Activated CD4-positive, alpha-beta memory T cell treated with anti-CD3 and anti-CD28 coated beads, Interleukin-2, amount 10 ng/mL, durations not matched to agents 7 days and 5 days (primary cell): ENCODE measurements at regions of chr5 and their contacts with region 1.

Region 1: DNA sequence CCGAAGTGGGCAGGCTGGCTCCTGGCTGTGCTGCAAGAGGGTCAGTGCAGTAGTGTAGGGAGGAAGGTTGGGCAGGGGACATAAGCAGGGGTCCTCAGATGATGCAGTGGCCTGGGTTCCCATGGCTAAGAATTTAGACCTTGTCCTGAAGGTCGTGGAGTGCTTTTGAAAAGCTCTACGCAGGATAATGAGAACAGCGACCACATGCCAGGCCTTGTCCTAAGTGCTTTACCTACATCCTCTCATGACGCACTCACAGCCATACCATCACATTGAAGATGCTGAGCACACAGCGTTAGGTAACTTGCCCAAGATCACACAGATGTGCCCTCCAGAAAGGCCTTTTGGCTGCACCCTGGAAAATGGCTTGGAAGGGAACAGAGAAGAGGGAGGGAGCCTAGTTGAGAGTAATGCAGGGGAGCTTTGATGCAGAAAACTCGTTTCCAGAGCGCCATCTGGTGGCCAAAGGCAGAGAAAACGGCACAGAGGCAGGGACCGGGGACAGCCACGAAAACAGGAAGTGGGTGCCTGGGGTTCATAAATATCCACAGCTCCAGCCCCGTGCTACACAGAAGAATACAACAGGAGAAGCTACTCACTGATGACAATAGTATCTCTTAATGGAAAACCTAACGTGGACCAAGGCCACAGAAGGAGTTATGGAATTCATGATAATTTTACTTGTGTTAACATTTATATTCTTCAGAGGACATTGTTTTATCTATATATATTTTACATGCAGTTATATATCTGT is 2.6 kb upstream of the PCDH12 start:
- DNase-seq: peak; percentile 93
- H3K4me3 Mint-ChIP-seq: peak overlapping the region; percentile 46
- H3K27ac Mint-ChIP-seq: peak overlapping the region; percentile 80
- H3K4me1 Mint-ChIP-seq: peaks cover 51% of the 10 kb centered on the region
- H3K27me3 Mint-ChIP-seq: no peaks in the 10 kb centered on the region

Region 2: DNA sequence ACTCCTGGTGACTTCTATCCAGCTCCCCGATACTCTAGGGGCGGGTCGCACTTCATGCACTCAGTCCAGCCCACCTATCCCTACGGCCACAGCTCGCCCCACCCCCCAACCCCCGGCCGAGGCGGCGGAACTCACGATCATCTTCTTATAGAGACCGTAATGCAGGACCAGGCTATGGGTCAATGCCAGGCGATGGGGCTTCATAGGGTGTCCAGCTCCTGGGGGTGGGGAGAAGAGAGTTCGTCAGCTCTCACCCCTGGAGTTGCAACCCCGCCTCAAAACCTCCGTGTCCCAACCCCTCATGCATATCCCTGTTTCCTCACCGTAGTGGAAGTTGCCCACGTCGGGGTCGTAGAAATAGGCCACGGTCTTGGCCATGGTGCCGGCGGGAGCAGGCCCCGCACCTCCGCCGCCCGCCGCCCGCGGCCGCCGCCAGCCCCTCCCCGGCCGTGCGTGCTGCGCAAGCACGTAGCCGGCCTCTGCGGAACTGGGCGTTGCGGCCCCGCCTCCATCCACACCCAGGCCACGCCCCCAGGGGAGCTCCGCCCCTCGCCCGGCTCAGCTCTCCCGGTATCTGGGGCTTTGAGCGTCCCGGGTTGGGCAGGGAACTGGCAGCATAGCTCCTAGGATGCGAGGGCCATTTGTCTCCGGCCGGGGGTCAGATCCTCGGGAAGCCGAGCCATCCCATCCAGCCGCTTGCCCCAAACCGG is 324.1 kb before region 1 on chr5 and contains the starts of genes HDAC3 and RELL2:
- CTCF ChIA-PET with region 1: interaction called, 10 read pairs
- POLR2A ChIA-PET with region 1: no interaction called
- DNase-seq: peak; percentile 94
- H3K4me3 Mint-ChIP-seq: peak within 1 kb of the TSS; percentile 93
- H3K27ac Mint-ChIP-seq: peak within 1 kb of the TSS; percentile 80
- H3K4me1 Mint-ChIP-seq: peaks cover 59% of the 10 kb centered on the region
- H3K27me3 Mint-ChIP-seq: no peaks in the 10 kb centered on the region
- total RNA-seq, gene HDAC3: 72.0 to 77.9 TPM
- total RNA-seq, gene RELL2: 18.8 to 19.4 TPM

Region 3: GRCh38 chr5:141701360-141702119 is 259.1 kb before region 1 on chr5:
- CTCF ChIA-PET with region 1: interaction called, 214 read pairs
- POLR2A ChIA-PET with region 1: interaction called, 7 read pairs
- DNase-seq: no peak
- H3K4me3 Mint-ChIP-seq: peak overlapping the region; percentile 70
- H3K27ac Mint-ChIP-seq: no peak overlapping the region
- H3K4me1 Mint-ChIP-seq: peaks cover 20% of the 10 kb centered on the region
- H3K27me3 Mint-ChIP-seq: peaks cover 36% of the 10 kb centered on the region

Region 4: GRCh38 chr5:141849375-141850243 is 111.0 kb before region 1 on chr5:
- CTCF ChIA-PET with region 1: interaction called, 12 read pairs
- POLR2A ChIA-PET with region 1: interaction called, 6 read pairs
- DNase-seq: peak; percentile 81
- H3K4me3 Mint-ChIP-seq: peak overlapping the region; percentile 80
- H3K27ac Mint-ChIP-seq: peak overlapping the region; percentile 84
- H3K4me1 Mint-ChIP-seq: peaks cover 21% of the 10 kb centered on the region
- H3K27me3 Mint-ChIP-seq: peaks cover 10% of the 10 kb centered on the region

Region 5: DNA sequence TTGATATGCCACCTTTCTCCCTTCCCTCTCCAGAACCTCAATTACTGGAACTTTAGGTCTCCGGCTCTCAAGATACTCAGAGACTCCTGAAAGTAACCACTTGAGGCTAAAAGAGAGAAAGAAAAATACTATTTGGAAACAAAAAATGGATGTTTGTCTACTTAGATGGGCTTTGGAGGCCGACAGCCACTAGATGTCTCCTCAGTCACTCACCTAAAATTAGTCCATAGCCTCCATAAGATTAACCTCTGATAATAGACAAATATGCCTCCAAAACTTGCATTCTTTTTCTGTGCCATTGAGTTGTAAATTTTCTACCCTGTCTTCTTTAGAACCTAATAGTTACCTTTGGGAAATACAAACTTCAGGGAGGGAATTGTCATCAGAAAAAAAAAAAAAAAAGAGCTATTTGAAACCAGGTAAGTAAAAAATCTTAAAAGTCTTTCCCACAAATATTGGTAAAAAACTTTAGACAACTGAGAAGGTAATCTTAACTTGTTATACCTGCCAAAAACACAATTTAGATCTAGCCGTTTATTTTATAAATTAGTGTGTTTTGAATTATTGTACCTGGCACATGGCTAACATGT is 71.2 kb before region 1 on chr5:
- CTCF ChIA-PET with region 1: interaction called, 53 read pairs
- POLR2A ChIA-PET with region 1: interaction called, 13 read pairs
- DNase-seq: no peak
- H3K4me3 Mint-ChIP-seq: no peak overlapping the region
- H3K27ac Mint-ChIP-seq: no peak overlapping the region
- H3K4me1 Mint-ChIP-seq: no peaks in the 10 kb centered on the region
- H3K27me3 Mint-ChIP-seq: peaks cover 38% of the 10 kb centered on the region

Region 6: GRCh38 chr5:141940695-141941271 is 19.8 kb before region 1 on chr5:
- CTCF ChIA-PET with region 1: interaction called, 72 read pairs
- POLR2A ChIA-PET with region 1: interaction called, 4 read pairs
- DNase-seq: no peak
- H3K4me3 Mint-ChIP-seq: no peak overlapping the region
- H3K27ac Mint-ChIP-seq: peak overlapping the region; percentile 52
- H3K4me1 Mint-ChIP-seq: peaks cover 23% of the 10 kb centered on the region
- H3K27me3 Mint-ChIP-seq: no peaks in the 10 kb centered on the region

Region 7: DNA sequence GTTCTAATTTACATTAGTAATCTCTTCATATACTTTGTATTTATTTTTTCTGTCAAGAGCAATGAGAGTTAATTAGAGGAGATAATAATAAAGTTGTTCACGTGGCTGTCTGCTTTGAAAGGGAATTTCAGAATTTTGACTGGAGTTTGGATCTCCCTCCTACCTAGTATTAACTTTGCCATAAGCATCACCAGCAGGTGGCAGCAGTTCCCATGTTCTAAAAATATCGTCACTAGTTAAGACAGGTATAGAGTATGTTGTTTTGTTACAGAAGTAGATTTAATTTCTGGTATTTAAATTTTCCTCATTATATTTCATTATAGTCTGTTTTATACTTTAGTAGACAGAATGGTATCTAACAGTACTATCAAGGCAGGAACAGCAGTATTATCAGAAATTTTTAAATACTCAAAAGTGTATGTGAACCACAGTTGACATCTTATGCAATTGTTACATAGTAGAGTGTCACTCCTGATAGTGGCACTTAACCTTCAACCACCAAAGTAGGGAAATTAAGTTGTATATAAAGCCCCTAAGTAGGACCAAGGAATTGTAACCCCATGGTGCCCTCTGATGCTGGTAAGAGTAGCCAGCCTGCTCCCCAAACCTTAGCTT is 31.8 kb after region 1 on chr5:
- CTCF ChIA-PET with region 1: interaction called, 19 read pairs
- POLR2A ChIA-PET with region 1: no interaction called
- DNase-seq: peak; percentile 79
- H3K4me3 Mint-ChIP-seq: no peak overlapping the region
- H3K27ac Mint-ChIP-seq: no peak overlapping the region
- H3K4me1 Mint-ChIP-seq: peaks cover 2% of the 10 kb centered on the region
- H3K27me3 Mint-ChIP-seq: no peaks in the 10 kb centered on the region

Region 8: GRCh38 chr5:142356716-142357473 is 396.3 kb after region 1 on chr5:
- CTCF ChIA-PET with region 1: no interaction called
- POLR2A ChIA-PET with region 1: no interaction called
- DNase-seq: peak; percentile 93
- H3K4me3 Mint-ChIP-seq: peak overlapping the region; percentile 77
- H3K27ac Mint-ChIP-seq: peak overlapping the region; percentile 91
- H3K4me1 Mint-ChIP-seq: peaks cover 41% of the 10 kb centered on the region
- H3K27me3 Mint-ChIP-seq: no peaks in the 10 kb centered on the region